AG04449 (cell line): ENCODE measurements at regions of chr19 and their contacts with region 1.

Region 1: DNA sequence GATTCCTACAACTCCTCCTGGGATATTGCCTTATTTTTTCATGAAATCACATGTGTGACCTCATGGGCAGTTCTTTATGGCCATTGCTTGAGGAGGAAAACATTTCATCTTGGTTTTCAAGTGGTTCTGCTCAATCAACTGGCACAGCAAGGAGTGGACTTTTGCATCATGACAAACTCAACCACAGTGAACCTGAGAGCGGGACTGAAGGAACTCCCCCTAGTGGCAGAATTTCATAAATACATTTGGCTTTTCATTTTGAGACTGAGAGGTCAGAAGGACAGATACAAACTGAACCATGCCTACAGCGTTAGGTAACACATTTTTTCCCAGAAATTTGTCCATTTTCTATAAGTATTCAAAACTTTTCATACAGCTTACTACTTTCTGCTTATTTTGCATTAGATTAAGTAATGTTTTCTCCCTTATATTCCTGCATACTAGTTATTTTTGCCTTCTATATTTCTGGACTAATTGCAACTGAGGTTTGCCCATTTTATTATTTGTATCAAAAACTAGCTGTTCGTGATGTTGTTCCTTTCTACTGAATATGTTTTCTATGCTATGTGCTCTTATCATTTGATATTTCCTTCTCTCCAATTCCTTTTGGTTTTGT is 13.4 kb upstream of the SIGLEC12 start:
- DNase-seq: peak; percentile 1
- H3K4me3 ChIP-seq: no peak overlapping the region
- CTCF ChIP-seq: peak; percentile 66

Region 2: DNA sequence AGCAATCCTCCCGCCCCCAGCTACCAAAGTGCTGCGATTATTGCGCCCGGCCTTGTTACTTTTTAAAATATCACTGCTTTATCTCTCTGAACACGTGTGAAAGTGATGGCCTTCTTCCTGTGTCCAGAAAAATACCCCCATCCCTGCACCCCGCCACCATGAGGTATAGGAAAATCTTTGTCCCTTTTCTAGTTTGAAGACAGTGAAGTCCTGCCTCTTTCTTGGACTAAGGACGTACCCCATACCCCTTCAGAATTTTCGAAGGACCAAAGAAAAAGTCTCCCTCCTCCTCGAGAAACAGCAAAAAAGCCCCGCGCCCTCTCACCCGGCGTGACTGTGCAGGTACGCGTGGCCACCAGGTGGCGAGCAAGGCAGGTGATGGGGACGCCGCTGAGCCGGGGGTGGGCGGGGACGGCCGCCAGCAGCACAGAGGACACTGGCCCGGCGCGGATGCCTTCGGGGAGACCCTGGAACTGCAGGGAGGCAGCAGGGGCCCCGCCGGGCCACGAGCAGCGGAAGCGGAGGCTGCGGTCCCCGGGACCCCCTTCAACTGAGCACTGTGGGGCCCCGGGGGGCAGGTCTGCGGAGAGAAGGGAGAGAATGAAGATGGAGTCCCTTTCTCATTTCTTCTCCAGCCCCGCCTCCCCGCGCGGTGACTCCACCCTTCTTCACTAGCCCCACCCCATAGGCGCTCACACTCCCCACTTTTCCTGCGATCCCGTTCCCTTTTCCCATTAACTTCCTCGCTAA is 176.2 kb before region 1 on chr19:
- CTCF ChIA-PET with region 1: interaction called, 18 read pairs
- POLR2A ChIA-PET with region 1: no interaction called
- DNase-seq: no peak
- H3K4me3 ChIP-seq: peak overlapping the region; percentile 74
- CTCF ChIP-seq: peak; percentile 93

Region 3: GRCh38 chr19:51398096-51398704 is 116.8 kb before region 1 on chr19:
- CTCF ChIA-PET with region 1: interaction called, 10 read pairs
- POLR2A ChIA-PET with region 1: no interaction called
- DNase-seq: no peak
- H3K4me3 ChIP-seq: no peak overlapping the region
- CTCF ChIP-seq: peak; percentile 42

Region 4: DNA sequence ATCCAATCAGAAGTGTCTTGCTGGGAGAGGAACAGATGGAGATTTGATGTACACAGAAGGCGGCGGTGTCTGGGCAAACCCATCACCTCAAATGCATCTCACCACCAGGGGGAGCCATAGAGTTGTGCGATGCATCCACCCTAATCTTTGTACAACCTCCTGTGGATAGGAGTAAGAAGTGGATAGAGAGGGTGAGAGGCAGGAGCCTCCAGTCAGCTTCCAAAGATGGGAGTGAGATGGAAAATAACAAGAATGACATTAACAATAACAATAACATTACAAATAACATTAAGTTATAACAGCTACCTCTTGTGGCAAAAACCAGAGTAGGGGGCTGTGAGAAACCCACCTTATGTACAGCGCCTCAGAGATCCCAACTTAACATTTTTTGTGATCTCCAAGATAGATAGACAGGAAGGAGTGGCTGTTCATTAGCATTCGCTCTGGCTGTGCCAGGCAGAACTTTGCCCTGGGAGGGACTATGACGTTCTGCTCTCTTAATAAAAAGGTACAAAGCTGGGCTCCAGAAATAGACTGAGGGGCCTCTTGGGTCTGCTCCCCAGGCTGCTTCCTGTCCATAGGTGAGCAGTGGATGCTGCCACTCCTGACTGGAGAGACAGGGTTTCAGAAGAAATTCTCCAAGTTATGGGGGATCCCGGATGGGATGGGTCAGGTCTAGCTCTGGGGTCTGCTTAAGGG is 41.8 kb before region 1 on chr19:
- CTCF ChIA-PET with region 1: interaction called, 10 read pairs
- POLR2A ChIA-PET with region 1: no interaction called
- DNase-seq: no peak
- H3K4me3 ChIP-seq: no peak overlapping the region
- CTCF ChIP-seq: peak; percentile 85

Region 5: DNA sequence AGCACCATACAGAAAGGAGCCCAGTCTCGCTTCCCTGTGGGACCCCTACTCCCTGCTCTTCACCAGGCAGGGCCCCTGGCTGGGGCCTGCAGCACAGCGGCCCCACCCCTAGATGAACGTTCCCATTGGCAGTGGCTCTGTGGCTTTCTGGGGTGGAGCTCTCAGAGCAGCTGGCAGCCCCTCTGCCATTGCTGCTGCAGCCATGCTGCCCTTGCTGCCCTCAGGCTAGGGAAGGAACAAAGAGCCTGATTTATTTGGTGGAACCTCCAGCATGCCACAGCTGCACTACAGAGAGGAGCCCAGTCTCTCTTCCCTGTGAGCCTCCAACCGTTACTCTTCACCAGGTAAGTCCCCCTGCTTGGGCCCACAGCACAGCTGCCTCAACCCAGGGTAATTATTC is 10.7 kb after region 1 on chr19:
- CTCF ChIA-PET with region 1: interaction called, 10 read pairs
- POLR2A ChIA-PET with region 1: no interaction called
- DNase-seq: no peak
- H3K4me3 ChIP-seq: no peak overlapping the region
- CTCF ChIP-seq: no peak